CD4-positive, alpha-beta memory T cell (primary cell): ENCODE measurements at regions of chr7 and their contacts with region 1.

Region 1: GRCh38 chr7:106176414-106177299 is 64.5 kb upstream of the SYPL1 start:
- DNase-seq: peak; percentile 46 to 58 (median 51)
- H3K4me3 ChIP-seq: no peak overlapping the region
- H3K4me3 Mint-ChIP-seq: no peak overlapping the region
- H3K27ac ChIP-seq: no peak overlapping the region
- H3K27ac Mint-ChIP-seq: peak overlapping the region in 1 of 7 donors; percentile 14
- H3K4me1 ChIP-seq: no peaks in the 10 kb centered on the region
- H3K4me1 Mint-ChIP-seq: peaks cover 0 to 4% (median 3%) of the 10 kb centered on the region in 4 donors
- H3K27me3 ChIP-seq: no peaks in the 10 kb centered on the region
- H3K27me3 Mint-ChIP-seq: peaks cover 3 to 10% of the 10 kb centered on the region in 2 donors

Region 2: DNA sequence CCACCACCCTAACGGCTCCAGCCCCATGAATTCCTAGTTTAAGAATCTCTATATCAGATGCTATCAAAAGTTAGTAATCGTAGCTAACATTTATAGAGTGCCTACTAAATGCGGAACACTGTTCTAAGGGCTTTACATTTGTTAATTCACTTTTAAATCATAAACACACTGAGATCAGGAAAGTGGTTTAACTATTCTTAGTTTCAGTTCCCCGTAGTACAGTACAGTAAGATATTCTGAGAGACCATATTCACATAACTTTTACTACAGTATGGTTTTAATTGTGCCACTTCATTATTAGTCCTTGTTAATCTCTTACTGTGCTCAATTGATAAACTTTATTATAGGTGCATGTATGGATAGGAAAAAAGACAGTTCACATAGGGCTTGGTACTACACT is 87.0 kb before region 1 on chr7:
- CTCF ChIA-PET with region 1: no interaction called
- POLR2A ChIA-PET with region 1: no interaction called
- intact Hi-C with region 1: no loop called
- DNase-seq: no peak
- H3K4me3 ChIP-seq: no peak overlapping the region
- H3K4me3 Mint-ChIP-seq: no peak overlapping the region
- H3K27ac ChIP-seq: no peak overlapping the region
- H3K27ac Mint-ChIP-seq: peak overlapping the region in 3 of 7 donors; percentile 4 to 74 (median 63)
- H3K4me1 ChIP-seq: no peaks in the 10 kb centered on the region
- H3K4me1 Mint-ChIP-seq: peaks cover 0 to 4% (median 2%) of the 10 kb centered on the region in 4 donors
- H3K27me3 ChIP-seq: no peaks in the 10 kb centered on the region
- H3K27me3 Mint-ChIP-seq: no peaks in the 10 kb centered on the region

Region 3: GRCh38 chr7:106367018-106367420 is 190.4 kb after region 1 on chr7:
- CTCF ChIA-PET with region 1: interaction called, 4 read pairs
- POLR2A ChIA-PET with region 1: no interaction called
- intact Hi-C with region 1: loop called (anchors 1 kb)
- DNase-seq: no peak
- H3K4me3 ChIP-seq: no peak overlapping the region
- H3K4me3 Mint-ChIP-seq: no peak overlapping the region
- H3K27ac ChIP-seq: no peak overlapping the region
- H3K27ac Mint-ChIP-seq: peak overlapping the region in 1 of 7 donors; percentile 49
- H3K4me1 ChIP-seq: no peaks in the 10 kb centered on the region
- H3K4me1 Mint-ChIP-seq: no peaks in the 10 kb centered on the region
- H3K27me3 ChIP-seq: no peaks in the 10 kb centered on the region
- H3K27me3 Mint-ChIP-seq: peaks cover 3 to 4% of the 10 kb centered on the region in 2 donors

Region 4: GRCh38 chr7:106456339-106456738 is 279.7 kb after region 1 on chr7:
- CTCF ChIA-PET with region 1: interaction called, 392 read pairs
- POLR2A ChIA-PET with region 1: no interaction called
- intact Hi-C with region 1: no loop called
- DNase-seq: no peak
- H3K4me3 ChIP-seq: no peak overlapping the region
- H3K4me3 Mint-ChIP-seq: no peak overlapping the region
- H3K27ac ChIP-seq: no peak overlapping the region
- H3K27ac Mint-ChIP-seq: no peak overlapping the region
- H3K4me1 ChIP-seq: no peaks in the 10 kb centered on the region
- H3K4me1 Mint-ChIP-seq: no peaks in the 10 kb centered on the region
- H3K27me3 ChIP-seq: no peaks in the 10 kb centered on the region
- H3K27me3 Mint-ChIP-seq: peaks cover 0 to under 1% of the 10 kb centered on the region in 2 donors

Region 5: GRCh38 chr7:106461993-106462859 is 285.6 kb after region 1 on chr7:
- CTCF ChIA-PET with region 1: interaction called, 392 read pairs
- POLR2A ChIA-PET with region 1: interaction called, 7 read pairs
- intact Hi-C with region 1: loop called (anchors 1 kb)
- DNase-seq: peak in 4 of 5 donors; percentile 15 to 33 (median 24)
- H3K4me3 ChIP-seq: no peak overlapping the region
- H3K4me3 Mint-ChIP-seq: no peak overlapping the region
- H3K27ac ChIP-seq: no peak overlapping the region
- H3K27ac Mint-ChIP-seq: no peak overlapping the region
- H3K4me1 ChIP-seq: no peaks in the 10 kb centered on the region
- H3K4me1 Mint-ChIP-seq: peaks cover 0 to 2% (median 0%) of the 10 kb centered on the region in 4 donors
- H3K27me3 ChIP-seq: no peaks in the 10 kb centered on the region
- H3K27me3 Mint-ChIP-seq: no peaks in the 10 kb centered on the region

Region 6: DNA sequence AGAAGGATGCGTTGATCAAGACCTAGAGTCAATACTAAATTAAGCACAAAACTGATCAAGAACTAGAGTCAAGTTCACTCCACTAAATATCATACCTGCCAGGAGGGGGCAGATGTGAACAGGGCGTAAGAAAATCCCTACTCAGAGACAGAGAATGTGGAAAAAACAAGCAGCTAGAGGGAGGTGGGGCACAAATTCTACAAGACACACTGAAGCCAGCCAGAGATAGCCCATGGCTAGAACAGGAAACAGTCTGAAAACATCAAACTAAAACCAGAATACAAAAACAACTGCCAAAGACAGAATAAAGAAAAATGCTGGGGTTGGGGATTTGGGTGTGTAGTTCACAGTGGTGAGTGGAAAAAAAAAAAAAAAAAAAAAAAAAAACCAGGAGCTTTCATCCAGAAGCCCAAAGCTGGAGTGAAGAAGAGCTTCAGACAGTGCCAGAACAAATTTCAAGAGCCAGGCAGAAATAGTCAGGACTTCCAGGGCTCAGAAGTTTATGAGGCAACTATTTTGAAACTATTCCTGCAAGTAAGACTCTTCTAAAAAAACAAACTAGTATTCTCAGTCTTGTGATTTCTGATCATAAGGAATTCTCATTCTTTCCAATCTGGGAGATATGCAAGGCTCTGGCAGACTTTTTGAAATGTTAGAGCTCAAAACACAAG is 366.0 kb after region 1 on chr7:
- CTCF ChIA-PET with region 1: interaction called, 3 read pairs
- POLR2A ChIA-PET with region 1: no interaction called
- intact Hi-C with region 1: loop called (anchors 5 kb)
- DNase-seq: peak; percentile 29 to 61 (median 37)
- H3K4me3 ChIP-seq: no peak overlapping the region
- H3K4me3 Mint-ChIP-seq: peak overlapping the region in 1 of 8 donors; percentile 2
- H3K27ac ChIP-seq: no peak overlapping the region
- H3K27ac Mint-ChIP-seq: peak overlapping the region in 5 of 7 donors; percentile 5 to 74 (median 13)
- H3K4me1 ChIP-seq: peaks cover 6% of the 10 kb centered on the region
- H3K4me1 Mint-ChIP-seq: peaks cover 9 to 16% (median 12%) of the 10 kb centered on the region in 4 donors
- H3K27me3 ChIP-seq: no peaks in the 10 kb centered on the region
- H3K27me3 Mint-ChIP-seq: no peaks in the 10 kb centered on the region

Region 7: GRCh38 chr7:106736508-106737201 is 560.0 kb after region 1 on chr7:
- CTCF ChIA-PET with region 1: interaction called, 46 read pairs
- POLR2A ChIA-PET with region 1: no interaction called
- intact Hi-C with region 1: loop called (anchors 1 kb)
- DNase-seq: peak; percentile 61 to 68 (median 63)
- H3K4me3 ChIP-seq: no peak overlapping the region
- H3K4me3 Mint-ChIP-seq: peak overlapping the region in 5 of 8 donors; percentile 3 to 61 (median 57)
- H3K27ac ChIP-seq: no peak overlapping the region
- H3K27ac Mint-ChIP-seq: peak overlapping the region in 5 of 7 donors; percentile 18 to 86 (median 72)
- H3K4me1 ChIP-seq: peaks cover 7% of the 10 kb centered on the region
- H3K4me1 Mint-ChIP-seq: peaks cover 8 to 18% (median 13%) of the 10 kb centered on the region in 4 donors
- H3K27me3 ChIP-seq: no peaks in the 10 kb centered on the region
- H3K27me3 Mint-ChIP-seq: no peaks in the 10 kb centered on the region